Activated naive CD4-positive, alpha-beta T cell treated with anti-CD3 and anti-CD28 coated beads for 36 hours (primary cell): ENCODE measurements at regions of chrX and their contacts with region 1.

Region 1: GRCh38 chrX:2500267-2501075 is at the starts of genes DHRSX and ZBED1:
- DNase-seq: peak; percentile 62
- H3K4me3 Mint-ChIP-seq: peak within 1 kb of the TSS; percentile 76
- H3K27ac Mint-ChIP-seq: peak within 1 kb of the TSS; percentile 72
- H3K4me1 Mint-ChIP-seq: peaks cover 26% of the 10 kb centered on the region
- H3K27me3 Mint-ChIP-seq: no peaks in the 10 kb centered on the region
- total RNA-seq, gene DHRSX: 18.8 to 21.4 TPM
- total RNA-seq, gene ZBED1: 18.9 to 20.6 TPM

Region 2: GRCh38 chrX:1649621-1650020 is 850.9 kb before region 1 on chrX:
- CTCF ChIA-PET with region 1: no interaction called
- intact Hi-C with region 1: loop called (anchors 1 kb)
- DNase-seq: no peak
- H3K4me3 Mint-ChIP-seq: no peak overlapping the region
- H3K27ac Mint-ChIP-seq: no peak overlapping the region
- H3K4me1 Mint-ChIP-seq: peaks cover 5% of the 10 kb centered on the region
- H3K27me3 Mint-ChIP-seq: no peaks in the 10 kb centered on the region

Region 3: GRCh38 chrX:2516626-2517025 is 16.2 kb after region 1 on chrX:
- CTCF ChIA-PET with region 1: no interaction called
- intact Hi-C with region 1: no loop called
- DNase-seq: no peak
- H3K4me3 Mint-ChIP-seq: no peak overlapping the region
- H3K27ac Mint-ChIP-seq: no peak overlapping the region
- H3K4me1 Mint-ChIP-seq: peaks cover 2% of the 10 kb centered on the region
- H3K27me3 Mint-ChIP-seq: peaks cover 5% of the 10 kb centered on the region

Region 4: DNA sequence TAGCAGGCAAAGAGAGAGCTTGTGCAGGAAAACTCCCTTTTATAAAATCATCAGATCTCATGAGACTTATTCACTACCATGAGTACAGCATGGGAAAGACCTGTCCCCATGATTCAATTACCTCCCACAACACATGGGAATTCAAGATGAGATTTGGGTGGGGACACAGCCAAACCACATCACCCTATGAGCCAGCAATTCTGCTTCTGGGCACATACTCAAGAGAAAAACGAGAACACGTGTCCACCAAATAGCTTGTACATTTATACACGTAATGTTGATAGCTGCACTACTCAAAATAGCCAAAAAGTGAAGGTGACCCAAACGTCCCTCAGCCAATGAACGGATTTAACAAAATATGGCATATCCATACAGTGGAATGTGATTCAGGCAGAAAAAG is 94.8 kb after region 1 on chrX:
- CTCF ChIA-PET with region 1: no interaction called
- intact Hi-C with region 1: loop called (anchors 1 kb)
- DNase-seq: no peak
- H3K4me3 Mint-ChIP-seq: no peak overlapping the region
- H3K27ac Mint-ChIP-seq: no peak overlapping the region
- H3K4me1 Mint-ChIP-seq: no peaks in the 10 kb centered on the region
- H3K27me3 Mint-ChIP-seq: no peaks in the 10 kb centered on the region

Region 5: DNA sequence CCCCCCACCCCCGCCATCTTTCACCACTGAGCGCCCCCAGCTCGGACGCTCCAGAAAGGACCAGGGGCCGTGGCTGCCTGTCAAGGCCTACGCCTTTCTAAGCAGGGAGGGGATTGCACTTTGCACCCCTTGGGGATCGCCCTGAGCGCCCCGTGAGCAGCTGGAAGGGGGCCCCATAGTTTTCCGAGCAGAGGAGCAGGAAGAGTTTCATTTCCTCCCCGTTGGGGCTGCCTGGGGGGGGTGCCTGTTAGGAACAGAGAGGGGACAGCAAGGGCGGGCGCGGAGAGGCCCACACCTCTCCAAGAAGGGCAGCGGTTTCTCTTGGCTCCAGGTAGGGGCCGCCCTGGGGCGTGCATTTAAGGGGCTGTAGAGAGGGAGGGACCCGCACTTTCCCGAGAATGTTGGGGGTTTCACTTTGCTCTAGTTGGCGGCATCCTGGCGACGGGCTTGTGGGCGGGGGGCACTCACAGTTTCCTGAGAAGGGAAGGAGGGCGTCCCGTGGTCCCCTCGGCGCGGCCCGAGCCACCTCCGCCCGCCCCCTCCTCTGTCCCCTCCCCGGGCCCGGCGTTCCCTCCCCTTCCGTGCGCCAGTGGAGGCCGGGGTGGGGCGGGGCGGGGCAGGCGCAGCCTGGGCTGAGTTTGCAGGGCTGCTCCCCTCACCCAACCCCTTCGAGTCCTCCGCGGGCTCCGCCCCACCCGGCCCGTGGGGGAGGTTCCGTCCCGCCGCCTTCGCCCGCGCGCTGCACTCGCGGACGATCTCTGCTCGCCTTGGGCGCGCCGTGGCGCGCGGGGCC is 108.4 kb after region 1 on chrX:
- CTCF ChIA-PET with region 1: no interaction called
- intact Hi-C with region 1: loop called (anchors 1 kb)
- DNase-seq: peak; percentile 82
- H3K4me3 Mint-ChIP-seq: peak overlapping the region; percentile 90
- H3K27ac Mint-ChIP-seq: peak overlapping the region; percentile 82
- H3K4me1 Mint-ChIP-seq: peaks cover 45% of the 10 kb centered on the region
- H3K27me3 Mint-ChIP-seq: no peaks in the 10 kb centered on the region

Region 6: DNA sequence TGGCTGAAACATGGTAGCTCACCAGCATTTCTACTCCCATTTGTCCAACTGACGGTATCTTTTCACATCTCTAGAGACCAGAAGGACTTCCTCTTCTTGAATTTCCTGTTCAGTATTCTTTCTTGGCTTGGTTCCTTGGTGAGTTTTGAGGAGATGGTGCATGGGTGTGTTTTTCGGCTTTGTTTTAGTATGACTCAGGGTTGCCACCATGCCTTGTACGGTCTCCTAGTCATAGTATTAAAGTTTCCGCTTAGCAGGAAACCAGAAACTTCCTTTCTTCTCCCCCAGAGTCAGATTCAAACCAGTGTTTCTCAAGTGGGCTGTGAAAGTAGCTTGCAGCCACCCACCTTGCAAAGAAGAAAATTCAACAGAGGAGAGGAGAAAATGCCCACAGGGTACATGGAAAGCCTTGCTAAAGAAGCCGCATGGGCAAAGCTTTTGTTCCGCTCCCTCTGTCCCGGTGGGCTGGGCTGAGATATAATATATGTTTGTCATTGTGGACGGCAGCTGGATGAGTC is 196.3 kb after region 1 on chrX:
- CTCF ChIA-PET with region 1: no interaction called
- intact Hi-C with region 1: no loop called
- DNase-seq: peak; percentile 76
- H3K4me3 Mint-ChIP-seq: peak overlapping the region; percentile 58
- H3K27ac Mint-ChIP-seq: peak overlapping the region; percentile 99
- H3K4me1 Mint-ChIP-seq: peaks cover 80% of the 10 kb centered on the region
- H3K27me3 Mint-ChIP-seq: no peaks in the 10 kb centered on the region